ENCODE measurements at regions of chr10 and their contacts with region 1.

Region 1: GRCh38 chr10:68628576-68629127 is 68.5 kb downstream of the TET1 start:
- DNase-seq: no peak
- H3K4me3 ChIP-seq: no peak overlapping the region
- H3K27ac ChIP-seq: no peak overlapping the region
- H3K27me3 ChIP-seq: no peaks in the 10 kb centered on the region
- CTCF ChIP-seq: no peak

Region 2: DNA sequence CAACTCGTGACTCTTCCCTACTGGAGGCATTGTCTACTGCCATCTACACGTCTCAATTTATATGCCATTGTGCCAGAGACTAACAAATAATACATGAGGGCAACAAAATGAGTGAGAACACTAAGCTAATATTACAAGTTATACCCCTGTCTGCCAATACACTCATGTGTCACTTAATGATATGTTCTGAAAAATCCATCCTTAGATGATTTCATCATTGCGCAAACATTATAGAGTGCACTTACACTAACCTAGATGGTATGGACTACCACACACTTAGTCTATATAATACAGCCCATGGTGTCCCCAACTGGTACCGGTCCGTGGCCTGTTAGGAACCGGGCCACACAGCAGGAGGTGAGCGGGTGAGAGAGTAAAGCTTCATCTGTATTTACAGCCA is 868.4 kb before region 1 on chr10:
- CTCF ChIA-PET with region 1: no interaction called
- POLR2A ChIA-PET with region 1: no interaction called
- DNase-seq: no peak
- H3K4me3 ChIP-seq: no peak overlapping the region
- H3K27ac ChIP-seq: no peak overlapping the region
- H3K27me3 ChIP-seq: peaks cover 3% of the 10 kb centered on the region
- CTCF ChIP-seq: no peak

Region 3: GRCh38 chr10:68543004-68543918 is 85.4 kb before region 1 on chr10:
- CTCF ChIA-PET with region 1: no interaction called
- POLR2A ChIA-PET with region 1: interaction called, 12 read pairs
- DNase-seq: no peak
- H3K4me3 ChIP-seq: no peak overlapping the region
- H3K27ac ChIP-seq: peak overlapping the region; percentile 39
- H3K27me3 ChIP-seq: no peaks in the 10 kb centered on the region
- CTCF ChIP-seq: no peak